ENCODE measurements at regions of chr7 and their contacts with region 1.

Region 1: GRCh38 chr7:155733582-155734444 is 78.5 kb downstream of the SHH start:
- DNase-seq: peak; percentile 62
- ATAC-seq: peak; percentile 82
- H3K4me3 Mint-ChIP-seq: no peak overlapping the region
- H3K27ac Mint-ChIP-seq: peak overlapping the region; percentile 79
- H3K4me1 Mint-ChIP-seq: peaks cover 70% of the 10 kb centered on the region
- H3K27me3 Mint-ChIP-seq: no peaks in the 10 kb centered on the region

Region 2: GRCh38 chr7:154584352-154585252 is 1149.2 kb before region 1 on chr7:
- CTCF ChIA-PET with region 1: no interaction called
- POLR2A ChIA-PET with region 1: no interaction called
- intact Hi-C with region 1: no loop called
- DNase-seq: no peak
- ATAC-seq: no peak
- H3K4me3 Mint-ChIP-seq: no peak overlapping the region
- H3K27ac Mint-ChIP-seq: no peak overlapping the region
- H3K4me1 Mint-ChIP-seq: no peaks in the 10 kb centered on the region
- H3K27me3 Mint-ChIP-seq: no peaks in the 10 kb centered on the region

Region 3: DNA sequence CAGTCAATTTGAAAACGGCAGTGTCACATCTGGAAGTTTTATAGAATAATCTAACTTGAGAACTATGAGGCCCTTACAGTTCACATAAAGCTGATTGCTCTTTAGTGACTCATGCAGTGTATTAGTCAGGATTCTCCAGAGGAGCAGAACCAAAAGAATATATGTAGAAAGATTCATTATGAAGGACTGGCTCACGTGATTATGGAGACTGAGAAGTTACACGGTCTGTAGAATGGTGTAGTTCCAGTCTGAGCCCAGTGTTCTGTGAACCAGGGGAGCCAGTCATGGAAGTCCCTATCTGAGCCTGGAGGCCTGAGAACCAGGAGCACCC is 67.9 kb before region 1 on chr7:
- CTCF ChIA-PET with region 1: no interaction called
- POLR2A ChIA-PET with region 1: no interaction called
- intact Hi-C with region 1: no loop called
- DNase-seq: no peak
- ATAC-seq: peak; percentile 95
- H3K4me3 Mint-ChIP-seq: no peak overlapping the region
- H3K27ac Mint-ChIP-seq: peak overlapping the region; percentile 61
- H3K4me1 Mint-ChIP-seq: peaks cover 83% of the 10 kb centered on the region
- H3K27me3 Mint-ChIP-seq: no peaks in the 10 kb centered on the region

Region 4: DNA sequence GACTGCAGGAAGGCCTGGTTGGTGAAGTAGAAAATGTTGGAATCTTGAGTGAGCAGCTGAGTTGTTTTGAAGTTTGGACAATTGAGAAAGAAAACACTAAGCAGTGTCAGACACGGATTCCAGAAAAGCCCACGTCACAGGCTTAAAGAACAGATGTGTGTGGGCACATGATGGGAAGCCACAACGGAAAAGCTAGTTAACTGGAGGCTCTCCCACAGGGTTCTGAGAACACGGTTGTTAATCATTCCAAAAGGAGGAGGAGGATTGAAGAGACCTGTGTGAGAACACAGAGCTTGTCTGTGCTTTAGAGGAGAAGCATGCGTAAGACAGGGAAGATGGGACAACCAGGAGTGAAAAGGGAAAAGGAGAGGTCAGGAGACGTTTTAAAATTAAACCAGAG is 35.9 kb after region 1 on chr7:
- CTCF ChIA-PET with region 1: interaction called, 15 read pairs
- POLR2A ChIA-PET with region 1: no interaction called
- intact Hi-C with region 1: loop called in 1 of 2 experiments (anchors 1 kb)
- DNase-seq: no peak
- ATAC-seq: no peak
- H3K4me3 Mint-ChIP-seq: no peak overlapping the region
- H3K27ac Mint-ChIP-seq: no peak overlapping the region
- H3K4me1 Mint-ChIP-seq: peaks cover 15% of the 10 kb centered on the region
- H3K27me3 Mint-ChIP-seq: no peaks in the 10 kb centered on the region

Measured in activated CD4-positive, alpha-beta T cell treated with anti-CD3 and anti-CD28 coated beads for 36 hours (primary cell).